ENCODE measurements at regions of chr3 and their contacts with region 1.

Region 1: GRCh38 chr3:94071713-94072284 is 8.9 kb downstream of the NSUN3 start:
- DNase-seq: no peak
- ATAC-seq: no peak
- H3K4me3 ChIP-seq: no peak overlapping the region
- H3K27ac ChIP-seq: no peak overlapping the region
- H3K4me1 ChIP-seq: no peaks in the 10 kb centered on the region
- H3K27me3 ChIP-seq: no peaks in the 10 kb centered on the region
- CTCF ChIP-seq: no peak
- POLR2A ChIP-seq: no peak

Region 2: DNA sequence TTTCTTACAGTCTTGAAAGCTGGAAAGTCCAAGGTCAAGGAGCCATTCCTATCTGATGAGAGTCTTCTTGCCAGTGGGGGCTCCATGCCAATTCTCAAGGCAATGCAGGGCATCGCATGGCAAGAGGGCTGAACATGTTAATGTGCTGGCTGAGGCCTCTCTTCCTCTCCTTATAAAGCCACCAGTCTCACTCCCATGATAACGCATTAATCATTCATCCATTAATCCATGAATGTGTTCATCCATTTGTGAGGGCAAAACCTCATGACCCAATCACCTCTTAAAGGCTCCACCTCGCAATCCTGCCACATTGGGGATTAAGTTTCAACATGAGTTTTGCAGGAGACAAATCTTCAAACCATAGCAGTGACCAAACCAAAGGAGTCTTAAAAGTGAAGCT is 216.4 kb before region 1 on chr3:
- intact Hi-C with region 1: no loop called
- DNase-seq: no peak
- ATAC-seq: no peak
- H3K4me3 ChIP-seq: no peak overlapping the region
- H3K27ac ChIP-seq: no peak overlapping the region
- H3K4me1 ChIP-seq: no peaks in the 10 kb centered on the region
- H3K27me3 ChIP-seq: no peaks in the 10 kb centered on the region
- CTCF ChIP-seq: no peak
- POLR2A ChIP-seq: no peak

Region 3: DNA sequence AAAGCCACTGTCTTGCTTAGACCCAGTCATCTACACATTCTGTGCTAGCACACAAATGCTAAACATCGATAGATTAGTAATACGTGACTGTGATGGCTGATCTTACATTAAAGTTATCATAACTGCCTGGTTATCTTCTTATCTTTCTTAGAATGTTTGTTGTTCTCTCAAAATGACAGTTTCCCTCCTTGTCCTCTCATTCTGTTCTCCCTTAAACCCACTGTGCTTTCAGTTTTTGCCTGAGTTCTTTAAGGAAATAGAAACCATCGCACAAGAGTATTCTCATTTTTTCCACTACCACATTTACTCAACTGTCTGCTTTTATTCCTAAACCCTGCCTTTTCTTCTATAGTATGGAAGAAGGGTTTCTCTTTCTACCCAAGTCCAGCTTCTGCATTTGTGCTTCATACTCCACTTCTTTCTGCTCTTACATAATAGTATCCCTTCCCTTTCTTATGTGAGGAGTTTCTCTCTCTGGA is 60.5 kb before region 1 on chr3:
- intact Hi-C with region 1: loop called (anchors 10 kb)
- DNase-seq: no peak
- ATAC-seq: peak in 3 of 4 donors; percentile 24 to 53 (median 29)
- H3K4me3 ChIP-seq: no peak overlapping the region
- H3K27ac ChIP-seq: no peak overlapping the region
- H3K4me1 ChIP-seq: peaks cover 0 to 10% (median 0%) of the 10 kb centered on the region in 4 donors
- H3K27me3 ChIP-seq: no peaks in the 10 kb centered on the region
- CTCF ChIP-seq: no peak
- POLR2A ChIP-seq: no peak

Measured in right lobe of liver (tissue), 6 donors.